ENCODE measurements at regions of chr12 and their contacts with region 1.

Region 1: DNA sequence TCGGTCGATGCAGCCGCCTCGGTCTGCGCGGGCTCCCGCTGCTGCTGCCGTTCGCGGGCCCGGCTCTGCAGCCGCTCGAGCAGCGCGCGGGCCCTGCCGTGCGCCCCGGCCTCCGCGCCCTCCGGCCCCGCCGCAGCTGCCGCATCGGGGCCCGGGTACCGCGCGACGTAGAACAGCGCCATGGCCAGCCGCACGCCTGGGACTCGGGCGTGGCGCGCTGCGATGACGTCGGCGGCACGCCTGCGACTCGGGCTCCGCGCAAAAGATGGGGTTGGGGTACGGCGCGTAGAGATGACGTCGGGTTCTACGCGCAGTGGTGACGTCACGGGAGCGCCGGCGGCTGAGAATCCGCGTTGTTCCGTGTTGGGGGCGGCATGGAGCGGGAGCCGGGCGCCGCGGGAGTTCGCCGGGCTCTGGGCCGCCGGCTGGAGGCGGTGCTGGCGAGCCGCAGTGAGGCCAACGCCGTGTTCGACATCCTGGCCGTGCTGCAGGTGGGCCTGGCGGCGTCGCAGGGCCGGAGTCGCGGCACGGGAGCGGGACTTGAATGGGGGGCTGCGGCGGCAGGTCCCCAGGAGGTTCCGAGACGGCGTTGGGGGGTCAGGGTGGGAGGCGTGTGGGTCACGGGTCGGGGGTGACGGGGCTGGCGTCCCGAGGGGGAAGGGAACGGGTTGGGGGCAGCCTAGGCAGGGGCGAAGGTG is at the starts of genes DDX51 and NOC4L:
- DNase-seq: peak; percentile 85 to 98 (median 94)

Region 2: DNA sequence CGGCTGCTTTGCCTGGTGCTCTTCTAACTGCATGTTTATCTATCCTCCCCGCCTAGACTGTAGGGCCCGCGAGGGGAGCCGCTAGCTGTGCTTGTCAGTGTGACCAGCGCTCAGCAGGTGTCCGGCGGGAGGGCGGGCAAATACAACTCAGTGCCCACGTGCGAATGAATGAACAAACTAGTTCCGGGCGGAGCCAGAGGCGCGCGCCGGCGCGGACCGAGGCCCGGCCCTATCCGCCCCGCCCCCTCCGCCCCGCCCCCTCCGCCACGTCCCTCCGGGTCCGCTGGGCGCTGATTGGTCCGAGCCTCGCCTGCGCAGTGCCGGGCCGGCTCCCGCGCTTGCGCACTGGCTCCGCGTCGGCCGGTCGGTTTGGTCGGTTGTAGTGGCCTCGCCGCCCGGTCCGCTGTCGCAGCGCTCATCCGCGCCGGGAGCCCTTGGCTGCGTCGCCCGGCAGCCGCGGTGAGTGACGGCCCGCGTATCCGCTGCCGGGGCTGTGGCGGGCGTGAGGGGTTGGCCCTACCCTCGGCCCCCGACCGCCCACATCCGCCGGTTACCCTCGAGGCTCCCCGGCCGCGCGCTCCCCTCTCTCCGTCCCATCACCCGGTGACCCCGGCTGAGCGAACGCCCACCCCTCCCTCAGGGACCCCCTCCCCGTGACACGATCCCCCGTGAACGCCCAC is 60.2 kb before region 1 on chr12:
- intact Hi-C with region 1: loop called (anchors 1 kb)
- DNase-seq: peak; percentile 71 to 96 (median 90)

Region 3: DNA sequence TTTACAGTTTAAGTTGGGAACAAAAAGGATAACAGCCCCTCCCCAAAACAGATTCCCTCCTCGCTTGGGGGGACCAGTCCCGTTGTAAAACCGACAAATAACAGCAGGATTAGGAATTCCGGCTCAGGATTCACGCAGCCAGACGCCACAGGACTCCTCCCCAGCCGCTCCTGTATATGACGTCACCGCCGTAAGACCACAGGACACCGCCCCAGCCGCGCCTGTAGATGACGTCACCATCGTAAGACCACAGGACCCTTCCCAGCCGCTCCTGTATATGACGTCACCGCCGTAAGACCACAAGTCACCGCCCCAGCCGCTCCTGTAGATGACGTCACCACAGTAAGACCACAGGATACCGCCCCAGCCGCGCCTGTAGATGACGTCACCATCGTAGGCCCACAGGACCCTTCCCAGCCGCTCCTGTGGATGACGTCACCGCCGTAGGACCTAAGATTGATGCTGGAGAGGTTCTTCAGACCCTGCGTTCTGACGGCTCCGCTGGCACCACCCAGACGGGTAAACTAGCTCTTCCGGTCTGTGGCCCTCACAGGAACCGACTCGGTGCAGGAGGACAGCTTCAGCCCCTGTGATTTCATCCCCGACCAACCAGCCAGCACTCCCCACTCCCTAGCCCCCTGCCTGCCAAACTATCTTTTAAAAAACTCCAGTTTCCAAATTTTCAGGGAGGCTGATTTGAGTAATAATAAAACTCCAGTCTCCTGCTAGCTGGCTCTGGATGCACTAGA is 301.8 kb after region 1 on chr12:
- intact Hi-C with region 1: no loop called
- DNase-seq: peak in 3 of 42 donors; percentile 40 to 59 (median 55)

Measured in head of caudate nucleus (tissue), 42 donors.